ENCODE measurements at regions of chrX and their contacts with region 1.

Region 1: GRCh38 chrX:129931411-129932015 is 25.5 kb downstream of the UTP14A start:
- H3K4me3 Mint-ChIP-seq: peak overlapping the region; percentile 91
- H3K27ac Mint-ChIP-seq: peak overlapping the region; percentile 91
- H3K4me1 Mint-ChIP-seq: peaks cover 10% of the 10 kb centered on the region
- H3K27me3 Mint-ChIP-seq: peaks cover 21% of the 10 kb centered on the region

Region 2: GRCh38 chrX:129982274-129983251 is 51.0 kb after region 1 on chrX and contains the start of gene BCORL1:
- intact Hi-C with region 1: loop called (anchors 2 kb)
- H3K4me3 Mint-ChIP-seq: no peak within 1 kb of the TSS
- H3K27ac Mint-ChIP-seq: no peak within 1 kb of the TSS
- H3K4me1 Mint-ChIP-seq: peaks cover 30% of the 10 kb centered on the region
- H3K27me3 Mint-ChIP-seq: peaks cover 3% of the 10 kb centered on the region

Measured in dendritic cell treated with granulocyte-macrophage colony-stimulating factor and Interleukin-4, amounts not matched to agents 40 ng/mL and 50 ng/mL, for 4 days (primary cell).